ENCODE measurements at regions of chr9 and their contacts with region 1.

Region 1: GRCh38 chr9:14428781-14429230 is 114.9 kb upstream of the NFIB start:
- DNase-seq: peak; percentile 9
- H3K4me3 Mint-ChIP-seq: no peak overlapping the region
- H3K27ac Mint-ChIP-seq: no peak overlapping the region
- H3K4me1 Mint-ChIP-seq: no peaks in the 10 kb centered on the region
- H3K27me3 Mint-ChIP-seq: peaks cover 7% of the 10 kb centered on the region

Region 2: DNA sequence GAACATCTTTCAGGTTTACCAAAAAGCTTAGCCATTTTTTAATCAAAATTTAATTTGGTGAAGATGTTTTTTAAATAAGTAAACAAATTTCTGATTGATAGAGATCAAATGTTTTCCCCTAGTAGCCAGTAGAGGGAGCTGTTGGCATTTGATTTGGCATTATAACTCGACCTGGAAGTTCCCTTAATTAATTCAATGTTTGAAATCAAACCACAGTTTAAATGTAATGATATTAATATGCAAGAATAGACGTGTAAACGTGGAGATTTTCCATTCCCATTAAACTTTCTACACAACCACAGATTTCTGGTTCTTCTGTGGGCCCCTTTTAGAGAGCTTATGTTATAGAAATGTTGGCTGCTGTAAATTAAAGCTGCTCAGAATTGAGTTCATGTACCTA is 1001.2 kb before region 1 on chr9:
- intact Hi-C with region 1: loop called (anchors 1 kb)
- DNase-seq: no peak
- H3K4me3 Mint-ChIP-seq: no peak overlapping the region
- H3K27ac Mint-ChIP-seq: no peak overlapping the region
- H3K4me1 Mint-ChIP-seq: no peaks in the 10 kb centered on the region
- H3K27me3 Mint-ChIP-seq: no peaks in the 10 kb centered on the region

Region 3: GRCh38 chr9:14706530-14707140 is 277.8 kb after region 1 on chr9:
- intact Hi-C with region 1: no loop called
- DNase-seq: no peak
- H3K4me3 Mint-ChIP-seq: no peak overlapping the region
- H3K27ac Mint-ChIP-seq: no peak overlapping the region
- H3K4me1 Mint-ChIP-seq: no peaks in the 10 kb centered on the region
- H3K27me3 Mint-ChIP-seq: peaks cover 4% of the 10 kb centered on the region